AG04450 (cell line): ENCODE measurements at regions of chr10 and their contacts with region 1.

Region 1: GRCh38 chr10:47165711-47166524 is 134.1 kb upstream of the GDF10 start:
- DNase-seq: peak; percentile 45
- H3K4me3 ChIP-seq: peak overlapping the region; percentile 3
- H3K27ac ChIP-seq: peak overlapping the region; percentile 96
- H3K27me3 ChIP-seq: no peaks in the 10 kb centered on the region
- CTCF ChIP-seq: no peak

Region 2: GRCh38 chr10:46999217-46999616 is 166.7 kb before region 1 on chr10:
- CTCF ChIA-PET with region 1: no interaction called
- POLR2A ChIA-PET with region 1: no interaction called
- DNase-seq: no peak
- H3K4me3 ChIP-seq: no peak overlapping the region
- H3K27ac ChIP-seq: no peak overlapping the region
- H3K27me3 ChIP-seq: peaks cover 2% of the 10 kb centered on the region
- CTCF ChIP-seq: no peak

Region 3: DNA sequence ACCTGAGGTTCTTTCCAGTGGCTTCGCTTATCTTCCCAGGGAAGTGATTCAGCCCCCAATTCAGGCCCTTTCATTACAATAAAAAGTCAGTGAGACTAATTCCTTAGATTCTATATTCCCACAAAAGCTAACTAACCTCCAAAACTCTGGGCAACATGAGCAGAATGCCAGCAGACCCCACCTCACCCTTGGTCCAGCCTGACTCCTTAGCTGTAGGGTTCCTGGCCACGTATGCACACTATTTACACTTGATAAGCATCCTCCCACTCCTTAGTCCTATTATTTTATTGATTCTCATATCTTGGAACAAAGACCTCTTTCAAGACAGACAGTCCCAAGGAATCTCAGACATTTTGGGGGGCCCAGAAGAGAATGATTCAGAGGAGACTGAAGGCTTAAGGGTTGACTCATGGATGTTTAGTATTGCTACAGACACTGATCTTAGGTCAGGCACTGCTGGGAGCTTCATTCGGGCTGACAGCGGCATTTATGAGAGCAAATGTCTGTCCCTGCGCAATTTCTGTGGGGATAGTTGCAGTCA is 28.5 kb before region 1 on chr10:
- CTCF ChIA-PET with region 1: interaction called, 3 read pairs
- POLR2A ChIA-PET with region 1: interaction called, 19 read pairs
- DNase-seq: peak; percentile 72
- H3K4me3 ChIP-seq: peak overlapping the region; percentile 56
- H3K27ac ChIP-seq: peak overlapping the region; percentile 95
- H3K27me3 ChIP-seq: no peaks in the 10 kb centered on the region
- CTCF ChIP-seq: no peak